Naive thymus-derived CD4-positive, alpha-beta T cell (primary cell): ENCODE measurements at regions of chr16 and their contacts with region 1.

Region 1: DNA sequence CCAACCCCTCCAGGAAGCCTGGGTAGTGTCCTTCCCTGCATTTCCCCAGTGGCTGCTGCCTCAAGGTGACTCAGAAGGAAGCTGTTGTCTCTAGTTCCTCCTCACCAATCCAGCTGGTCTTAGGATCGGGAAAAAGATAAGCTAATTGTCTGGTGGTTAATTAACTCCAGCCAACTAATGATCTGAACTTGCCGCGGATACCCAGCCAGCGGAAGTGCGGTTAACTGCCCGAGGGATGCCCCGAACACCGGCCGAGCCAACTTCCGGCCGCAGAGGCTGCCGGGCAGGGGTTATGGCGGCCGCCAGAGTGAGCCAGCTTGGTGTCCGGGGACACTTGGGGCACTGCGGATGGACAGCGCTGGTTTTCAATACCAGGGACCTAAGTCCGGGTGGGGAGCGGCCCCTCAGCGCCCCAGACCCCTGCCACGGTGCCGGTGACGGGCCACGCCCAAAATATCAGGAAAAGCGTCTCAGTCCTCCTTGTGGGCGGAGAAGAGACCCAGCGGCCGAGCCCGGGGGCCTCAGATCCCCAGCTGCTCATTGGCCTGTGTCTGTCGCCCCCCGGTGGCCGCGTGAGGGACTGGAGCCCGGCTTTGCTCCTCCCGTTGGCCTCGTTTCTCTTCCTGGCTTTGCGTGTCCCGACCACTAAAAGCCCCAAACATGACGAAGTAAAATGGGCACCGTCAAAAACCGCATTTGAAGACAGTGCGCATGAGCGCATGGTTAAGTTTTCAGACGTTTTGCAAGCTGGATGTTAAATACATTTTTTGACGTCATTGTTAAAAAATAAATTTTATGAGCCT is 10.2 kb upstream of the PRSS22 start:
- DNase-seq: peak; percentile 87 to 94 (median 91)
- ATAC-seq: peak; percentile 98
- H3K4me3 ChIP-seq: peak overlapping the region; percentile 70
- H3K4me3 Mint-ChIP-seq: peak overlapping the region; percentile 79 to 91 (median 86)
- H3K27ac ChIP-seq: peak overlapping the region; percentile 67
- H3K27ac Mint-ChIP-seq: peak overlapping the region; percentile 67 to 89 (median 82)
- H3K4me1 ChIP-seq: no peaks in the 10 kb centered on the region
- H3K4me1 Mint-ChIP-seq: peaks cover 0 to 23% (median 16%) of the 10 kb centered on the region in 7 donors
- H3K27me3 ChIP-seq: no peaks in the 10 kb centered on the region
- H3K27me3 Mint-ChIP-seq: peaks cover 0 to 10% (median 0%) of the 10 kb centered on the region in 5 donors

Region 2: DNA sequence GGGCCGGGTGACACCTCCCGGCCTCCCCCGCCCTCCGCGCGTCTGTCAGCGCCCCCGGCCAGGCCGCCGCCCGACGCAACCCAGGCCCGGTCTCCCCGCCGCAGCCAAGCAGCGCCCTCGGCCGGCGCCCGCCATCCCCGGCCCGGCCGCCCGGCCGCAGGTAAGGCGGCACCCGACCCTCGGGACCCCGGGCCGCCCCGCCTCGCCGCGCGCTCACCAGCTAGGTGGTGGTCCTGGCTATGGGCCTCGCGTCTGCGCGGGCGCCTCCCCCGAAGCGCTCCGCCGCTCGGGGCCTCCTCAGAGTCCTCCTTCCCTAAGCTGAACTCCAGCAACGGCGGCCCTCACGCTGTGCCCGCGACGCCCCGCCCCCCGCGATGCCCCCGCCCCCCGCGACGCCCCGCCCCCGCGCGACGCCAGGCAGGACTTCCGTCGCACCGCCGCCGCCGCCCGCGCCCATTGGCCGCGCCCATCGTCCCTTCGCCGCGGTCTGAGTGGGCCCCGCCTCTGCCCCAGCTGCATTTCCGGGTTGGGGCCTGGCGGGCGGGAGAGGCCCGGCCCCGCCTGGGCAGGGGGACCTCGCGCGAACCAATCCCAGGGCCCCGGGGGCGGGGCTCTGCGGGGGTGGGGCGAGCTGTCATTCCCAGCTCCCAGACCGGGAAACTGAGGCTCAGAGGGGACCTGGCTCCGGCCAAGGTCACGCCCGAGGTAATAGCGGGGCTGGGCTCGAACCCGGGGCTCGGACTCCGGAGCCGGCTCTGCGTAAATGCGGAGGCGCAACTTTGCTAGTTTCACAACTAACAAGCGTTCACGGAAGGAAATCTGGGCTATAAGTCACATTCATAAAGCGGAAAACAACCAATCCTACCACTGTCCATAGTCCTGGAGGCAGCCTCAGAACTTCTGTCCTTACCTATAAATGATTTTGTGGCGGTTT is 194.9 kb before region 1 on chr16:
- CTCF ChIA-PET with region 1: no interaction called
- POLR2A ChIA-PET with region 1: no interaction called
- intact Hi-C with region 1: loop called in 1 of 2 experiments (anchors 2 kb)
- DNase-seq: peak; percentile 89 to 97 (median 96)
- ATAC-seq: peak; percentile 97
- H3K4me3 ChIP-seq: peak overlapping the region; percentile 75
- H3K4me3 Mint-ChIP-seq: peak overlapping the region; percentile 68 to 90 (median 86)
- H3K27ac ChIP-seq: peak overlapping the region; percentile 75
- H3K27ac Mint-ChIP-seq: peak overlapping the region in 8 of 9 donors; percentile 68 to 89 (median 82)
- H3K4me1 ChIP-seq: peaks cover 8 to 9% of the 10 kb centered on the region in 2 donors
- H3K4me1 Mint-ChIP-seq: peaks cover 12 to 45% (median 34%) of the 10 kb centered on the region in 7 donors
- H3K27me3 ChIP-seq: no peaks in the 10 kb centered on the region
- H3K27me3 Mint-ChIP-seq: no peaks in the 10 kb centered on the region

Region 3: DNA sequence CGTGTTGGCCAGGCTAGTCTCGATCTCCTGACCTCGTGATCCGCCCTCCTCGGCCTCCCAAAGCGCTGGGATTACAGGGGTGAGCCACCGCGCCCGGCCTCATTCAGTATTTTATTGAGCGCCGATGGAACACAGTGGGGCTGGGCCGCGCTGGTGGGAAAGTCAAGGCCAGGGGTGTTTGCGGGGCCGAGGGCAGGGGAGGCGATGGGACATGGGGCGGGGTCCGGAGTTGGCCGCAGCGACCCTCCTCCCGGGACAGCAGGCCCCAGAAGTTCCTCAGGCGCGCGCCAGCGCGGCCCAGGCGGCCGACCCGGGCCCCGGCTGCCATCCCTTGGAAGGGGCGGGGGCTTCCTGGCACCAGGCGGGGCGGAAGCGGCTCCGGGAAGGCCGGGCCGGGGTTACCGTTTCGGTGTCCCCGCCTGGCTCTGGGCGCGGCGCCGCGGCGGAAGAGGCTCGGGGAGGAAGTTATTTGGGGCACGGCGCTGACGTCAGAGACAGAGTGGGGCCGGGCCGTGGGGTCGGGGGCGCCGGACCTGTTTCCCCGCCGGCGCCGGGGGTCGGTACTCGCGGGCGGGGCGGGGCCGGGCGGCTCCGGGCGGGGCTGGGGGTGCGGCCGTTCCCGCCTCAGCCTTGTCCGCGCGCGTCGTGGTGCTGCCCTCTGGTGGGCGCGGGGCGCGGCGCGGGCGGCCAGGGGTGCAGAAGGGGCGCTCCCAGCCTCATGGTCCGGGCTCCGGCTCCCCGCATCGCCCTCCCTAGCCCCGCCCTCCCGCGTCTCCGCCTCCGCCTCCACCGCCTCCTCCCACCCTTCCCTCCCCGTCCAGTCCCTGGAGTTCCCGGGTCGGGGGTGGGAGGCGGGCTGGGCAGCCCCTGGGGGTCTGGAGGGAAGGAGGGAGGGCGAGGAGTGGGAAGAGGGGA is 147.2 kb before region 1 on chr16:
- CTCF ChIA-PET with region 1: no interaction called
- POLR2A ChIA-PET with region 1: no interaction called
- intact Hi-C with region 1: loop called (anchors 2 kb)
- DNase-seq: peak; percentile 74 to 91 (median 85)
- ATAC-seq: peak; percentile 95
- H3K4me3 ChIP-seq: peak overlapping the region; percentile 37
- H3K4me3 Mint-ChIP-seq: peak overlapping the region; percentile 55 to 82 (median 76)
- H3K27ac ChIP-seq: peak overlapping the region; percentile 74
- H3K27ac Mint-ChIP-seq: peak overlapping the region in 7 of 9 donors; percentile 38 to 90 (median 64)
- H3K4me1 ChIP-seq: no peaks in the 10 kb centered on the region
- H3K4me1 Mint-ChIP-seq: peaks cover 0 to 5% (median 0%) of the 10 kb centered on the region in 7 donors
- H3K27me3 ChIP-seq: no peaks in the 10 kb centered on the region
- H3K27me3 Mint-ChIP-seq: peaks cover 9 to 14% (median 10%) of the 10 kb centered on the region in 5 donors

Region 4: DNA sequence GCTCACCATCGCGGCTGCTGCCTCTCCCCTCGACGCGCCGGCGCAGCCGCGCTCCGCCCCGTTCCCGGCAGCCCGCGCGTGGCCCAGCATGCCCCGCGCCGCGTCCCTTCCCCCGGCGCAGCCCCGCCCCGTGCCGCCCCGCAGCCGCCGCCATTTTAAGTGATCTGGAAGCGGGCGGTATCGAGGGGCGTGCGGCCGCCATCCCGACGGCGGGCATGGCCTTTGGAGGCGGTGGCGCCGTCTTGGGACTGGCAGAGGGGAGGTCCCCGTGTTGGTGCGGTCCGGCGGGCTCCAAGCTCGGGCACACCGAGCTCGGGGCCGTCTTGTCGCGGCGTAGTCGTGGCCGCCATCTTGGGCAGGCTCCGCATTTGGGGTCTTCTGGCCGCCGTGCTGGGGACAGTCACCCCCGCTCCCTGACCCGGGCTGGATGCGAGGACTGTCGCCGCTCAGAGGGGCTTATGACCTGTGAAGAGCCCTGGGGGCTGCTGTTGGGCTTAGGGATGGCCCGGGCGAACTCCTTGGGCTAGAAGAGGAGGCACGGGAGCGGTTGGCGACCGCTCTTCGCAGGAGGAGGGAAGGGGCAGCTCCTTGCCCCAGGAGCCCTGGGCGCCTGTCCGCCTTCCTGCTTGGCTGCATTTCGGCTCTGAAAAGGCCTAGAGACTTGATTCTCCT is 90.8 kb before region 1 on chr16 and contains the start of gene ELOB:
- CTCF ChIA-PET with region 1: no interaction called
- POLR2A ChIA-PET with region 1: interaction called, 9 read pairs
- intact Hi-C with region 1: loop called (anchors 1 to 5 kb)
- DNase-seq: peak; percentile 81 to 95 (median 90)
- ATAC-seq: peak; percentile 95
- H3K4me3 ChIP-seq: peak within 1 kb of the TSS; percentile 93
- H3K4me3 Mint-ChIP-seq: peak within 1 kb of the TSS; percentile 93 to 97 (median 96)
- H3K27ac ChIP-seq: peak within 1 kb of the TSS; percentile 99
- H3K27ac Mint-ChIP-seq: peak within 1 kb of the TSS; percentile 96 to 99 (median 98)
- H3K4me1 ChIP-seq: peaks cover 19 to 24% of the 10 kb centered on the region in 2 donors
- H3K4me1 Mint-ChIP-seq: peaks cover 20 to 55% (median 38%) of the 10 kb centered on the region in 7 donors
- H3K27me3 ChIP-seq: no peaks in the 10 kb centered on the region
- H3K27me3 Mint-ChIP-seq: no peaks in the 10 kb centered on the region
- total RNA-seq, gene ELOB: 65.3 to 242 (median 99.3) TPM

Region 5: DNA sequence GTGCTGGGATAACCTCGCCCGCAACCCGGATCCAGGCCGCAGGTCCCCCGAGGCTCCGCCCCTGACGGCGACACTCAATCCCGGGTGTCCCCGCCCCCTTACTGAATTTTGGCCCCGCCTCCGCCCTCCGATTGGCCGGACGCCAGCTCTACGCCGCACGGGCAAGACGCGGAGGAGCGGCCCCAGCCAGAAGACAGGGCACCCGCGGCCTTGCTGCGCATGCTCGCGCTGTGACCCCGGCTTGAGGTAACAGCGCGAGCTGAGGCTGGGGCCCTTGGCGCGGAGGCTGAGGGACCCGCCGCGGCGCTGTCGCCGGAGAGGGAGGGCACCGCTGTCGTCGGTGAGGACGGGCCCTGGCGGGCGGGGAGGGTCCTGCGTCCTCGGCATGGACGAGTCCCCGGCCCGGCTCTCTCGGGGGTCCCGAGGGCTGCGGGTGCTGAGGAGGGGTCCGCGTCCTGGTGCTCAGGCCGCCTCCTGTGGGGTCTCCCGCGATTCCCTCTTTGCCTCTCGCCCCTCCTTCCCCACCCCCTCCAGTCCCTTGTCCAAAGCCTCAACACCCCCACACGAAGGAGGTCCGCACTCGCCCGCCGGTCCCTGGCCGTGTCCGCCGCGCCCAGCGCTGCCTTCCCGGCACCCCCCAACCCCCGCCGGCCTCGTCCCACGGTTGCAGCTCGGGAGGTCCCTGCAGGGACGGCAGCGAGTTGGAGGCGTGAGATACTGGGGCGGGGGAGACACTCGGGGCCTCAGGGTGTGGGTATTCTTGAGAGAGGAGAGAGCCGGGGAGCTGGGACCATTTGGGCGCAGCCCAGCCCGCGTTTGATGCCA is 15.1 kb after region 1 on chr16 and contains the start of gene FLYWCH2:
- CTCF ChIA-PET with region 1: interaction called, 4 read pairs
- POLR2A ChIA-PET with region 1: interaction called, 11 read pairs
- intact Hi-C with region 1: loop called (anchors 1 kb)
- DNase-seq: peak; percentile 98 to 100 (median 100)
- ATAC-seq: peak; percentile 89
- H3K4me3 ChIP-seq: peak within 1 kb of the TSS; percentile 69
- H3K4me3 Mint-ChIP-seq: peak within 1 kb of the TSS; percentile 90 to 97 (median 94)
- H3K27ac ChIP-seq: peak within 1 kb of the TSS; percentile 84
- H3K27ac Mint-ChIP-seq: peak within 1 kb of the TSS; percentile 93 to 99 (median 97)
- H3K4me1 ChIP-seq: peaks cover 6% of the 10 kb centered on the region in 2 donors
- H3K4me1 Mint-ChIP-seq: peaks cover 0 to 18% (median 13%) of the 10 kb centered on the region in 7 donors
- H3K27me3 ChIP-seq: no peaks in the 10 kb centered on the region
- H3K27me3 Mint-ChIP-seq: no peaks in the 10 kb centered on the region
- total RNA-seq, gene FLYWCH2: 13.6 to 30.4 (median 24.0) TPM